CD8-positive, alpha-beta T cell (primary cell): ENCODE measurements at regions of chr16 and their contacts with region 1.

Region 1: GRCh38 chr16:69396187-69397061 is 10.6 kb upstream of the TERF2 start:
- DNase-seq: peak; percentile 27 to 87 (median 74)
- ATAC-seq: peak; percentile 85
- H3K4me3 ChIP-seq: no peak overlapping the region
- H3K4me3 Mint-ChIP-seq: no peak overlapping the region
- H3K27ac ChIP-seq: peak overlapping the region in 1 of 2 experiments; percentile 58
- H3K27ac Mint-ChIP-seq: peak overlapping the region; percentile 0
- H3K4me1 ChIP-seq: peaks cover 4% of the 10 kb centered on the region
- H3K4me1 Mint-ChIP-seq: peaks cover 6% of the 10 kb centered on the region
- H3K27me3 ChIP-seq: no peaks in the 10 kb centered on the region
- H3K27me3 Mint-ChIP-seq: no peaks in the 10 kb centered on the region
- CTCF ChIP-seq: peak; percentile 80

Region 2: DNA sequence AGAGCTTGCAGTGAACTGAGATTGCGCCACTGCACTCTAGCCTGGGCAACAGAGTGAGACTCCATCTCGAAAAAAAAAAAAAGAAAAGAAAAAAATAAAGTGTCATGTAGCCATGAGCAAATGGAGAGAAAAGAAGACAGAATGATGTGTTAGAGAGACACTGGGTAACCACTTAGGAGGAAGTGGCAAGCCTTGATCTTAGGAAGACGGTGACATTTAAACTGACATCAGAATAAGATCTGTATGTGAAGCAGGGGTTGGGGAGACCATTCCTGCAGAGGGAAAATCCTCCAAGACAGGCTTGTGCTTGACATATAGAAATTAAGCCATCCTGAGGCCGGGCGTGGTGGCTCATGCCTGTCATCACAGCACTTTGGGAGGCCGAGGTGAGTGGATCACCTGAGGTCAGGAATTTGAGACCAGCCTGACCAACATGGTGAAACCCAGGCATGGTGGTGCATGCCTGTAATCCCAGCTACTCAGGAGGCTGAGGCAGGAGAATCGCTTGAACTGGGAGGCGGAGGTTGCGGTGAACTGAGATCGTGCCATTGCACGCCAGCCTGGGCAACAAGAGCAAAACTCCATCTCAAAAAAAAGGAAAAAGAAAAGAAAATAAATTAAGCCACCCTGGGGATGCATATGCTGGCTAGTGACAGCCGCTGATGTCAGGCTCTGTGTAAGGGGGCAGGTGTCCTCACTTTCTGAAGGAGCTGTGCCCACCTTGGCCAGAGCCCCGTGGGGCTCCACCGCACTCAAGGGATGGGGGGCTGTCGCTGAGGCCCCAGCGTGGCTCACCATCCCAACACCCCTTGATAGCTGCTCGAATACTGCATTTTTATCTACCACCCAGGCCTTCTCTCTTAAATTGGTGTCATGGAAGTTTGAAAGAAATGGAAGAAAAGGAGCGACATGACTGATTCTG is 14.9 kb after region 1 on chr16:
- CTCF ChIA-PET with region 1: interaction called, 17 read pairs
- POLR2A ChIA-PET with region 1: interaction called, 3 read pairs
- intact Hi-C with region 1: no loop called
- DNase-seq: peak in 2 of 9 experiments; percentile 17 to 42
- ATAC-seq: peak; percentile 79
- H3K4me3 ChIP-seq: no peak overlapping the region
- H3K4me3 Mint-ChIP-seq: no peak overlapping the region
- H3K27ac ChIP-seq: no peak overlapping the region
- H3K27ac Mint-ChIP-seq: peak overlapping the region; percentile 22
- H3K4me1 ChIP-seq: peaks cover 4% of the 10 kb centered on the region
- H3K4me1 Mint-ChIP-seq: peaks cover 15% of the 10 kb centered on the region
- H3K27me3 ChIP-seq: no peaks in the 10 kb centered on the region
- H3K27me3 Mint-ChIP-seq: no peaks in the 10 kb centered on the region
- CTCF ChIP-seq: no peak

Region 3: DNA sequence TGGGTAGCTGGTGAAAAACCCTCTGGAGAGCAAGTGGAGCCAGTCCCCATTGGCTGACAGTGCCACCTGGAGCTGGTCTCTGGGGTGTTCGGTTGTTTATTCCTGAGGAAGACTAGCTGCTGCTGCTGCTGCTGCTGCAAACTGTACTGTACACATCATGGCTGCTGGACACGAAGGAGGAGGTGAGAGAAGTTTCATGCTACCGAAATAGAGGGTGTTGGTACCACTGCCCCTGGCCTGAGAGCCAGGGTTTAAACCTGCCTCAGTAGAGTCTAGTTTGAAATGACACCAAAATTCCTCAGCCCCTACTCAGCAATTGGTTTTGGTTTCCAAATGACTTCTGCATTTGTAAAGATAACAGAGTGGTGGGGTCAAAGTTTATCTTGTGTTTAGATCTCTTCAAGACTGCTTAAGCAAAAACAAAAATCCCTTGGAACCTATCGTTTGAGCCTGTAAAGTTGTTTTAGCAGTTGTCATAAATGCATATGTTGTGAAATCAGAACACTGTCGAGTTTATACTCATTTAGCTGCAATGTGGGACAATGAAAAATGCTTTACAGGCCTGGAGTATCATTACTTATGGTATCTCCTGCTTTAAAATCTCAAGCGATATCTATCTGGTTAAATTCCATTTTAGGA is 68.8 kb after region 1 on chr16:
- CTCF ChIA-PET with region 1: interaction called, 9 read pairs
- POLR2A ChIA-PET with region 1: no interaction called
- intact Hi-C with region 1: loop called (anchors 1 to 5 kb)
- DNase-seq: peak in 4 of 9 experiments; percentile 25 to 44 (median 32)
- ATAC-seq: peak; percentile 52
- H3K4me3 ChIP-seq: no peak overlapping the region
- H3K4me3 Mint-ChIP-seq: no peak overlapping the region
- H3K27ac ChIP-seq: peak overlapping the region in 1 of 2 experiments; percentile 41
- H3K27ac Mint-ChIP-seq: peak overlapping the region; percentile 90
- H3K4me1 ChIP-seq: no peaks in the 10 kb centered on the region
- H3K4me1 Mint-ChIP-seq: peaks cover 29% of the 10 kb centered on the region
- H3K27me3 ChIP-seq: no peaks in the 10 kb centered on the region
- H3K27me3 Mint-ChIP-seq: no peaks in the 10 kb centered on the region
- CTCF ChIP-seq: no peak

Region 4: DNA sequence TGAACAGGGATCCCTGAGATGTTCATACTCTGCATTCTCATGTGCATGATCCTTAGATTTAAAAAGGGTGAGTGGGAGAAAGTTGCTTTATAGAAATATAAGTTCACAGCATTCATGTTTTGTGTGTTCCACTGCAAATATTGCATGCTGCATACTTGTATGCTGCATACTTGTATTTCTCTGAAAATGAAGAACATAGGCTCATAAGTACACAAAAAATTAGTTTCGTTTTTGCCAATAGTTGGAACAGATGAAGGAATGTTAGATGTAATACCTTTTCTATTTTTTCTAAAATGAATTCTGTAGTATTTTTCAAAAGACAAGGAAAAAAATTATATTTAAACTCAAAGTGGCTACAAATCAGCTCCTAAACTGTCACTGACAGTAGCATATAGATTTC is 248.4 kb after region 1 on chr16:
- CTCF ChIA-PET with region 1: interaction called, 7 read pairs
- POLR2A ChIA-PET with region 1: no interaction called
- intact Hi-C with region 1: loop called (anchors 5 to 10 kb)
- DNase-seq: no peak
- ATAC-seq: no peak
- H3K4me3 ChIP-seq: no peak overlapping the region
- H3K4me3 Mint-ChIP-seq: no peak overlapping the region
- H3K27ac ChIP-seq: no peak overlapping the region
- H3K27ac Mint-ChIP-seq: no peak overlapping the region
- H3K4me1 ChIP-seq: no peaks in the 10 kb centered on the region
- H3K4me1 Mint-ChIP-seq: peaks cover 3% of the 10 kb centered on the region
- H3K27me3 ChIP-seq: no peaks in the 10 kb centered on the region
- H3K27me3 Mint-ChIP-seq: no peaks in the 10 kb centered on the region
- CTCF ChIP-seq: no peak

Region 5: DNA sequence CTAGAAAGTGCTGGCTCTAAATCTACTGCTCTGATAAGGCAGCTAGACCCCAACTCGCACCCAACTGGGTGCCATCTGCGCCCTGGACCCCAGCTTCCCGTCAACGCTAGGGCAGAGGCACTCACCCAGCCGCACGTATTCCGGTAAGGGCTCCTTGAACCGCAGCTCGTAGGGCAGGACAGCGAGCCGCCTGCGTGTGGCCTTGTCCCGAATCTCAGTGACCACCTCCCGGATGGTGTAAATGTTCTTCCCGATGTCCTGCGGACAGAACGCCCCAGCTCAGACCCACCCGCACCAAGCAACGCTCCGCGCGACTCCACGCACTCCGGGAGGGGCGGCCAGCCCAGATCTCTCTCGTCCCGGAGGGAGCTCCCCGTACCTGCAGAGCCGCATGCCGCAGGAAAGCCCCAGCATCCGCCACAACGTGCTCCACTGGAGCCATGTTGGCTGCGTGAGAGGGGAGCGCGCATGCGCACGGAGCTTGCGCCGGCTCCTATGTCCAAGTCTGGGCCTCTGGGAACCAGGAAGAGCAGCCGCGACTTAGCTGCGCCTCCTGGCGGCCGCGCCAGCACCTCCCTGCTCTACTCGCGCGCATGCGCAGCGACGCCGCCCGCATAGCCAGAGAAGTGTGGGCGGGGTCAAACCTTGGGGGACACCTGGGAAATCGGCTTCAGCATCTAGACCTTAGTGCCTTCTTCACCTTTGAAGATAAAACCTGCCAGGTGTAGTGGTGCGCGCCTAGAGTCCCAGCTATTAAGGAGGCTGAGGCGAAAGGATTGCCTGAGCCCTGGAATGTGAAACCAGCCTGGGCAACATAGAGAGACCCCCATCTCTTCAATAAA is 358.3 kb after region 1 on chr16 and contains the start of gene NOB1:
- CTCF ChIA-PET with region 1: interaction called, 16 read pairs
- POLR2A ChIA-PET with region 1: interaction called, 11 read pairs
- intact Hi-C with region 1: loop called (anchors 1 kb)
- DNase-seq: peak; percentile 94 to 100 (median 98)
- ATAC-seq: peak; percentile 97
- H3K4me3 ChIP-seq: peak within 1 kb of the TSS; percentile 91 to 100
- H3K4me3 Mint-ChIP-seq: peak within 1 kb of the TSS; percentile 100
- H3K27ac ChIP-seq: peak within 1 kb of the TSS; percentile 78 to 84
- H3K27ac Mint-ChIP-seq: peak within 1 kb of the TSS; percentile 98
- H3K4me1 ChIP-seq: peaks cover 9% of the 10 kb centered on the region
- H3K4me1 Mint-ChIP-seq: peaks cover 29% of the 10 kb centered on the region
- H3K27me3 ChIP-seq: no peaks in the 10 kb centered on the region
- H3K27me3 Mint-ChIP-seq: no peaks in the 10 kb centered on the region
- CTCF ChIP-seq: peak; percentile 79
- total RNA-seq, gene NOB1: 46.4 to 48.0 TPM